Posterior cingulate gyrus (tissue), 11 donors: ENCODE measurements at regions of chr5 and their contacts with region 1.

Region 1: DNA sequence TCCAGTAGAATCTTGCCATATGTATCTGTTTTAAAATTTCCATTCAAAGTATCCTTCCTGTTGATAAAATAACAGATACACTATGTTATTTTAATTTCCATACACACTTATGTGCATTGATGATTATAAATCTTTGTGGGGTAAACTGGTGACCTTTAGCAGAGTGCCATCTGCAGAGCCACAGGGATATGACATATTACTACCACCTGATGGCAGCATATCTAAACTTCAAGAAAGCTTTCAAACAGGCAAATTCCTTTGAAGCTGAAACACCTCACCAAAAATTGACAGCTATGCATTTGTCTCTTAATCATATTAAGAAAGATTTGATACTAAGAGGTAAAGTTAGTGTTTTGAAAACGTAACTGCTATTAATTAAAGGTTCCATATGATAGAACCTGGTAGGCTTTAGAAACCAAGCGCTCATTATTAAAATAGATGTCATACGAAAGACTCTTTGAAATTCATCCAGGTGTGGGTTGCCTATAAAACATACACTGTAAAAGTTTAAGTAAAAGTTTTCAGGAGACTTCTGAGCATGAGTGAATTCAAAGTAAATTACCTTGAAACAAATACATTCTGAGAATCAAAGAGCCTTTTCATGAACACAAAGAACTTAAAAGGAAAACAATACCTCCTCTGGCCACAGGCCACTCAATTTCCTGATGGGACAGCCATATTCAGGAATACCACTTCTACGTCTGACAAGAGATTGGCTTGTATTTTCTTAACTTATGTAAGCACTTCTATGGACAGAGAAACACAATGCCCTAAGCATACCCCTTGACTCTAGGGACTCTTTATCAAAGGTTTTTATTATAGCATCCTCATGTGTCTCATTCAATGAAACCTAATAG is 93.3 kb downstream of the KIAA0825 start:
- DNase-seq: no peak

Region 2: GRCh38 chr5:94693043-94693822 is 168.2 kb after region 1 on chr5:
- intact Hi-C with region 1: loop called (anchors 10 kb)
- DNase-seq: no peak

Region 3: GRCh38 chr5:94731471-94731870 is 206.4 kb after region 1 on chr5:
- intact Hi-C with region 1: loop called (anchors 10 kb)
- DNase-seq: no peak

Region 4: GRCh38 chr5:94849821-94850736 is 325.0 kb after region 1 on chr5:
- intact Hi-C with region 1: loop called (anchors 5 kb)
- DNase-seq: no peak